ENCODE measurements at regions of chr17 and their contacts with region 1.

Region 1: GRCh38 chr17:1454541-1454940 is 1.5 kb downstream of the CRK start:
- DNase-seq: no peak
- ATAC-seq: no peak
- H3K4me3 ChIP-seq: peak overlapping the region in 3 of 4 donors; percentile 60 to 100 (median 76)
- H3K27ac ChIP-seq: peak overlapping the region in 2 of 4 donors; percentile 85 to 92
- H3K4me1 ChIP-seq: peaks cover 5 to 22% (median 14%) of the 10 kb centered on the region in 3 donors
- H3K27me3 ChIP-seq: no peaks in the 10 kb centered on the region
- CTCF ChIP-seq: no peak

Region 2: GRCh38 chr17:1509290-1509881 is 54.8 kb after region 1 on chr17:
- intact Hi-C with region 1: loop called in 1 of 3 experiments (anchors 5 kb)
- DNase-seq: no peak
- ATAC-seq: no peak
- H3K4me3 ChIP-seq: no peak overlapping the region
- H3K27ac ChIP-seq: no peak overlapping the region
- H3K4me1 ChIP-seq: no peaks in the 10 kb centered on the region
- H3K27me3 ChIP-seq: no peaks in the 10 kb centered on the region
- CTCF ChIP-seq: no peak